H1 (cell line): ENCODE measurements at regions of chr7 and their contacts with region 1.

Region 1: GRCh38 chr7:101410743-101411507 is 48.2 kb downstream of the COL26A1 start:
- DNase-seq: peak; percentile 83 to 95
- H3K4me3 ChIP-seq: no peak overlapping the region
- H3K27ac ChIP-seq: no peak overlapping the region
- H3K4me1 ChIP-seq: peaks cover 4 to 9% (median 6%) of the 10 kb centered on the region in 4 experiments
- H3K27me3 ChIP-seq: no peaks in the 10 kb centered on the region
- CTCF ChIP-seq: peak; percentile 88 to 99 (median 99)
- EP300 ChIP-seq: no peak
- POLR2A ChIP-seq: no peak
- RAD21 ChIP-seq: peak; percentile 78 to 89

Region 2: GRCh38 chr7:101315336-101315735 is 95.6 kb before region 1 on chr7:
- CTCF ChIA-PET with region 1: interaction called, 11 read pairs
- POLR2A ChIA-PET with region 1: no interaction called
- DNase-seq: peak in 1 of 2 experiments; percentile 81
- H3K4me3 ChIP-seq: no peak overlapping the region
- H3K27ac ChIP-seq: no peak overlapping the region
- H3K4me1 ChIP-seq: no peaks in the 10 kb centered on the region
- H3K27me3 ChIP-seq: no peaks in the 10 kb centered on the region
- CTCF ChIP-seq: peak in 2 of 3 experiments; percentile 57 to 74; a peak in 2 of 4 replicates
- EP300 ChIP-seq: no peak
- POLR2A ChIP-seq: no peak
- RAD21 ChIP-seq: peak; percentile 39 to 57; a peak in 3 of 4 replicates

Region 3: DNA sequence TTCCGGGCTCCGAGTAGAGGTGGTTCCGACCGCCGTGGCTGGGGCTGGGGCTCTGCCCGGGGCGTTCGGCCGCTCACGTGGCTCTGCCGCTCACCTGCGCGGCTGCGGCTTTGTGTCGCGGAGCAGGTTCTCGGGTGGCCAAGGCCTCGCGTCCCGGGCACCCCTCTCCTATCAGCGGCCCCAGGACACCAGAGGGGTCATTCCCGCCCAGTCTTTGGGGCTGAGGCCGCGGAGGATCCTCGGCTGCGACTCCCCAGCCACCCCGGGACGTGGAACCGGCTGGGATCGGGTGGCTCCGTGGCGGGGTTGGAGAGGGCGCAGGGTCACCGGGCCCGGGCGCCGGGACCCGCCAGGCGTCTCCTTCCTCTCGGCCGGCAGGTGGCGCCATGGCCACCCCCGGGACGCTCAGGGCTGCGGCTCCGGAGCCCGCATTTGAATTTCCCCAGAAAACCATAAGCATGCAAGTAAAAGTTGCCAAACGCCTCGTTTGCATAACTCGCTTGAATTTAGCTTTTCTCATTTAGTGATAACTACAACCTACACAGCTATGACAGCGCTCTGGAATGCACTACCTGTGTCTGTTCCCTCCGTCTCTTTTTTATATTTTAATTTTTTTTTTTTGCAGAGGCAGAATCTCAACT is 47.1 kb before region 1 on chr7:
- CTCF ChIA-PET with region 1: interaction called, 728 read pairs
- POLR2A ChIA-PET with region 1: interaction called, 7 read pairs
- DNase-seq: peak in 1 of 2 experiments; percentile 89
- H3K4me3 ChIP-seq: peak overlapping the region; percentile 64 to 84 (median 73)
- H3K27ac ChIP-seq: peak overlapping the region; percentile 86; the same call in 1 of the 2 replicates
- H3K4me1 ChIP-seq: peaks cover 0 to 3% (median 2%) of the 10 kb centered on the region in 4 experiments; a peak in 3 of 7 replicates
- H3K27me3 ChIP-seq: no peaks in the 10 kb centered on the region; a peak in 1 of 7 replicates
- CTCF ChIP-seq: peak; percentile 73 to 94 (median 74)
- EP300 ChIP-seq: no peak
- POLR2A ChIP-seq: peak; percentile 41 to 73
- RAD21 ChIP-seq: peak; percentile 76 to 86

Region 4: GRCh38 chr7:101426303-101427011 is 15.5 kb after region 1 on chr7:
- CTCF ChIA-PET with region 1: interaction called, 20 read pairs
- POLR2A ChIA-PET with region 1: interaction called, 7 read pairs
- DNase-seq: no peak
- H3K4me3 ChIP-seq: no peak overlapping the region
- H3K27ac ChIP-seq: no peak overlapping the region
- H3K4me1 ChIP-seq: no peaks in the 10 kb centered on the region
- H3K27me3 ChIP-seq: no peaks in the 10 kb centered on the region
- CTCF ChIP-seq: no peak
- EP300 ChIP-seq: no peak
- POLR2A ChIP-seq: no peak
- RAD21 ChIP-seq: no peak

Region 5: DNA sequence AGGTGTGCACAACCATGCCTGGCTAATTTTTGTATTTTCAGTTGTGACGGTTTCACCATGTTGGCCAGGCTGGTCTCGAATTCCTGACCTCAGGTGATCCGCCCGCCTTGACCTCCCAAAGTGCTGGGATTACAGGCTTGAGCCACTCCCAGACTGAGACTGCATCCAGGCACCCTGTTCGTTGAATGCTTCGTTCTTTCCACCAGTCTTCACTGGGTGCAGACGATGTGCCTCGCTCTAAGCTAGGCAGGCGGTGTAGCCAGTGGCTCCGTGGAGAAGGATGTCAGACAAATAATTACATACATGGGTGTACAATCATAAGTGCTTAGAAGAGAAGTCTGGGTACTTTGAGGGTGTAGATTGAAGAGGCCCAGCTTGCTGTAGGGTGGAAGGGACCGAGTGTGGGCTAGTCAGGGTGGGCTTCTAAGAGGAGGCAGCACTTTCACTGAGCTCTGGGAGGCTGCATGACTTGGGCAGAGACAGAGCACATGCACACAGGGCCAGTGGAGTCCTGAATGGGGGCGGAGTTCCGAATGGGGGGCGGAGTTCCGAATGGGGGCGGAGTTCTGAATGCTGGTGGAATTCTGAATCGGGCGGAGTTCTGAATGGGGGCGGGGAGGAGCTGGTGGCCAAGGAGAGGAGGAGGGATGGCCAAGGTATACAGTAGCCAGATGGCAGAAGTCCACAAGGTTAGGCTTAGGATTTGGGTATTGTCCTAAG is 26.1 kb after region 1 on chr7:
- CTCF ChIA-PET with region 1: interaction called, 39 read pairs
- POLR2A ChIA-PET with region 1: interaction called, 5 read pairs
- DNase-seq: peak; percentile 44 to 91
- H3K4me3 ChIP-seq: no peak overlapping the region
- H3K27ac ChIP-seq: no peak overlapping the region
- H3K4me1 ChIP-seq: peaks cover 4 to 19% (median 11%) of the 10 kb centered on the region in 4 experiments
- H3K27me3 ChIP-seq: no peaks in the 10 kb centered on the region
- CTCF ChIP-seq: no peak
- EP300 ChIP-seq: no peak
- POLR2A ChIP-seq: no peak
- RAD21 ChIP-seq: no peak

Region 6: GRCh38 chr7:101502466-101503098 is 91.7 kb after region 1 on chr7:
- CTCF ChIA-PET with region 1: interaction called, 13 read pairs
- POLR2A ChIA-PET with region 1: interaction called, 3 read pairs
- DNase-seq: no peak
- H3K4me3 ChIP-seq: no peak overlapping the region
- H3K27ac ChIP-seq: no peak overlapping the region
- H3K4me1 ChIP-seq: peaks cover 2 to 20% (median 7%) of the 10 kb centered on the region in 4 experiments
- H3K27me3 ChIP-seq: no peaks in the 10 kb centered on the region
- CTCF ChIP-seq: no peak
- EP300 ChIP-seq: no peak
- POLR2A ChIP-seq: no peak
- RAD21 ChIP-seq: no peak

Region 7: GRCh38 chr7:101838837-101839483 is 428.0 kb after region 1 on chr7:
- CTCF ChIA-PET with region 1: no interaction called
- POLR2A ChIA-PET with region 1: no interaction called
- DNase-seq: no peak
- H3K4me3 ChIP-seq: no peak overlapping the region
- H3K27ac ChIP-seq: no peak overlapping the region; the same call in 1 of the 2 replicates
- H3K4me1 ChIP-seq: peaks cover 0 to 3% (median 1%) of the 10 kb centered on the region in 4 experiments; a peak in 2 of 7 replicates
- H3K27me3 ChIP-seq: no peaks in the 10 kb centered on the region
- CTCF ChIP-seq: no peak
- EP300 ChIP-seq: no peak
- POLR2A ChIP-seq: no peak
- RAD21 ChIP-seq: no peak